Activated naive CD4-positive, alpha-beta T cell treated with anti-CD3 and anti-CD28 coated beads for 36 hours (primary cell): ENCODE measurements at regions of chr5 and their contacts with region 1.

Region 1: DNA sequence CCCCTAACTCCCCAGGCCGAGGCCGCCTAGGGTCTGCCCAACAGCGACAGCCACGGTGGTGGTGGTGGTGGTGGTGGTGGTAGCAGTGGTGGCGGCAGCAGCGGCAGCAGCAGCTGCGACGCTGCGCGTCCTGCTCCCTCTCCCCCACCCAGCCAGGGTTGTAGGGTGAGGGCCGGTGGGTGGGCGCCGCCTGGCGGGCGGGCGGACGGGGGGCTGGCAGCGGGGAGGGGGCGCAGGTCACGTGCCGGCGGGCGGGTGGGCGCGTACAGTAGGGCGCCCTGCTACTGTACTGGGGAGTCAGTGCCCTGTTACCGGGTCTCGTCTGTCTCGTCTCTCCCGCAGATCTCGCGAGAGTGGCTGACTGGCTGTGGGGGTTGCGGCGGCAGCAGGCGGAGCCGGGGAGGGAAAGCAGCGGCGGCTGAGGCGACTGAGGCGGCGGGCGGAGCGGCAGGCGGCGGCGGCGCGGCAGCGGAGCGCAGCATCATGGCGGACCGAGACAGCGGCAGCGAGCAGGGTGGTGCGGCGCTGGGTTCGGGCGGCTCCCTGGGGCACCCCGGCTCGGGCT is at the start of gene PURA:
- DNase-seq: peak; percentile 98
- H3K4me3 Mint-ChIP-seq: peak within 1 kb of the TSS; percentile 91
- H3K27ac Mint-ChIP-seq: peak within 1 kb of the TSS; percentile 90
- H3K4me1 Mint-ChIP-seq: peaks cover 66% of the 10 kb centered on the region
- H3K27me3 Mint-ChIP-seq: no peaks in the 10 kb centered on the region
- total RNA-seq, gene PURA: 9.0 to 10.3 TPM

Region 2: DNA sequence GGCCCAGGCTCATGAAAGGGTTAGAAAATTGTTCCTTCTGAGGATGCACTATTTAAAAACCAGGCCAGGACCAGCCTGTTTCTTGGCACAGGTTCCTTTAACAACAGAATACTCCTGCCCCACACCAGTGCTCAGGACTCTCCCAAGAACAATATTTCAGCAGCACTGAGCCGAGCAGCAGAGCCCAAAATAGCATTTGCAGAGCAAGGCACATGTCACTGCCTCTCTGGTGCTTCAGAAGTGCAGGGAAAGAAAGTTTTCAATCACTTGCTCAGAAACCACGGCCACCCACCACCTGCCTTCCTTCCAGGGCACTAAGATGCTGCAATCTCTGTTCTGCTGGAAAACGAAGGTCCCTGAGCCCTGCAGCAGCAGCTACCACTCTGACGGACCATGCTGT is 993.3 kb before region 1 on chr5:
- CTCF ChIA-PET with region 1: no interaction called
- intact Hi-C with region 1: no loop called
- DNase-seq: no peak
- H3K4me3 Mint-ChIP-seq: no peak overlapping the region
- H3K27ac Mint-ChIP-seq: no peak overlapping the region
- H3K4me1 Mint-ChIP-seq: no peaks in the 10 kb centered on the region
- H3K27me3 Mint-ChIP-seq: no peaks in the 10 kb centered on the region

Region 3: DNA sequence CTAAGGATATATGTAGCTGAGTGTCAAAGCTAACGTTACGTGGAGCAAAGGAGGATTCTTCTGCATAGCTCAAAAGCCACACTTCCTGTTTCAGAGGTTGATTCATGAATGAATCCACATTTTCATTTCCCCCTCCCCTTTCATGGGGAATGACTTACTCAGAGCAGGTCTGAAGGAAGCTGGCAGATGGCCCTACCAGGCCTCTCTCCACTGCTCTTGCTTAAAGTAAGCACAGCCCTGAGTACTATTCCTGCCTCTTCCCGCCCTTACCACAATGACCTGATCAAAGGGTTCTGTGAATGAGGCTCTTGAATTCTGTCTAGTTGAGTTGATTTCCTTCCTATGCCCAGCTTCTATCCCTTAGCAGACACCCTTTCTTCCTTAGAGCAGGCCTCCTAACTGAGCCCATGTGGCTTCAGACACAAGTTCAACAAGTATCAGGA is 18.2 kb after region 1 on chr5:
- CTCF ChIA-PET with region 1: interaction called, 14 read pairs
- intact Hi-C with region 1: no loop called
- DNase-seq: peak; percentile 55
- H3K4me3 Mint-ChIP-seq: no peak overlapping the region
- H3K27ac Mint-ChIP-seq: no peak overlapping the region
- H3K4me1 Mint-ChIP-seq: peaks cover 39% of the 10 kb centered on the region
- H3K27me3 Mint-ChIP-seq: no peaks in the 10 kb centered on the region